GM12878 (cell line): ENCODE measurements at regions of chr1 and their contacts with region 1.

Region 1: DNA sequence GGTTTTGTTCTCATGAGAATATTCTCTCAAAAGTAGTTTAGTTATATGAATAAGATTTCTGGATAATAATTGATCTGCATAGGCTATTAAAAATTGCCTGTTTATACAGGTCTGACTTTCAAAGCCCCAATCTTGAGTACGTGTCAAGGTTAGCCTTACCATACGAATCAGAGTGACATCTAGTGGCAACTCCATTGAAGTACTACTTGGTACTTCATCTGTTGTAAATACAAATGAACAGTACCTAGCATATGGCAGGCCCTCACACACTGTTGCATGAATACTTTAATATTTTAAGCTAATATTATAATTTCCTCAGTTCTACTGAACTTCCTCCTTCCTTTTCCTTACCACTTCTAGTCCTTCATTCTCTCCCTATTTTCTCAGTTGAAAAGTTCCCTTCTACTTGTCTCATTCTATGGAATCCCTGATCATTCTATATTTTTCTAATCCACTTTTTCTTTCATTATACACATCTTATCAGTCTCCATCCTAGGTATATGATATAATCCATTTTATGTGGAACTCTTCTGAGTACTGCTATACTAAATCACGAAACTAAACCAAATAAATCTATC is 101.2 kb downstream of the AKT3 start:
- DNase-seq: peak; percentile 28
- ATAC-seq: peak; percentile 99
- H3K4me3 ChIP-seq: no peak overlapping the region
- H3K27ac ChIP-seq: no peak overlapping the region
- H3K4me1 ChIP-seq: no peaks in the 10 kb centered on the region
- H3K27me3 ChIP-seq: no peaks in the 10 kb centered on the region; a peak in 1 of 4 replicates
- CTCF ChIP-seq: peak; percentile 71 to 75 (median 73)
- EP300 ChIP-seq: no peak
- POLR2A ChIP-seq: no peak
- RAD21 ChIP-seq: peak; percentile 90

Region 2: DNA sequence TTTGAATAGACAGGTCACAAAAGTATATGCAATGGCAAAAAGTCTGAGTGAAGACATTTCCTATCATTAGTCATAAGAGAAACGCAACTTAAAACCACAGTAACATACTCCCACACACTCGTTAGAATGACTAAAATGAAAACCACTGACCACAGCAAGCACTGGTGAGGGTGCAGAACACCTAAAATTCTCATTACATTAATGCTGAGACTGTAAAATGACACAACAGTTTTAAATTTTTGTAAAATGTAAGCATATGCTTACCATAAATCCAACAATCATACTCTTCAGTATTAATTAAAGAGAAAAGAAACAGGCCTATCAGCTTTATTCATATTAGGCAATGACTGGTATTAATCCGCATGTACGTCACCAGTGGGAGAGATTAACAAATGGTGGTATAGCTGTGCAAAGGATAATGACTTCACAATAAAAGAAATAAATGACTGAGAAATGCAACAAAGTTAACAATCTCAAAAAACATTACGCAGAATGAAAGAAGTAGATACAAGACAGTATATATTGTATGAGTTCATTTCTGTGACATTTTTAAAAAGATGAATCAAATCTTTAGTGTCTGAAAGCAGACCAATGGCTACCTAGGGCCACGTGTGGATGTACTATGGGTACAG is 152.2 kb before region 1 on chr1:
- CTCF ChIA-PET with region 1: no interaction called
- POLR2A ChIA-PET with region 1: no interaction called
- RAD21 ChIA-PET with region 1: no interaction called
- SMC1A ChIA-PET with region 1: no interaction called
- in situ Hi-C with region 1: no loop called
- intact Hi-C with region 1: loop called (anchors 5 kb)
- DNase-seq: peak; percentile 76
- ATAC-seq: peak; percentile 98
- H3K4me3 ChIP-seq: no peak overlapping the region
- H3K27ac ChIP-seq: peak overlapping the region; percentile 43; the same call in 1 of the 2 replicates
- H3K4me1 ChIP-seq: peaks cover 14% of the 10 kb centered on the region; the same call in 1 of the 2 replicates
- H3K27me3 ChIP-seq: no peaks in the 10 kb centered on the region
- CTCF ChIP-seq: no peak
- EP300 ChIP-seq: peak; percentile 90 to 96
- POLR2A ChIP-seq: no peak
- RAD21 ChIP-seq: no peak

Region 3: GRCh38 chr1:243713470-243714186 is 35.2 kb before region 1 on chr1:
- CTCF ChIA-PET with region 1: interaction called, 32 read pairs
- POLR2A ChIA-PET with region 1: no interaction called
- RAD21 ChIA-PET with region 1: interaction called, 36 read pairs
- SMC1A ChIA-PET with region 1: interaction called, 30 read pairs
- in situ Hi-C with region 1: no loop called
- intact Hi-C with region 1: loop called (anchors 1 kb)
- DNase-seq: no peak
- ATAC-seq: no peak
- H3K4me3 ChIP-seq: no peak overlapping the region
- H3K27ac ChIP-seq: no peak overlapping the region
- H3K4me1 ChIP-seq: no peaks in the 10 kb centered on the region
- H3K27me3 ChIP-seq: no peaks in the 10 kb centered on the region
- CTCF ChIP-seq: no peak
- EP300 ChIP-seq: no peak
- POLR2A ChIP-seq: no peak
- RAD21 ChIP-seq: no peak

Region 4: DNA sequence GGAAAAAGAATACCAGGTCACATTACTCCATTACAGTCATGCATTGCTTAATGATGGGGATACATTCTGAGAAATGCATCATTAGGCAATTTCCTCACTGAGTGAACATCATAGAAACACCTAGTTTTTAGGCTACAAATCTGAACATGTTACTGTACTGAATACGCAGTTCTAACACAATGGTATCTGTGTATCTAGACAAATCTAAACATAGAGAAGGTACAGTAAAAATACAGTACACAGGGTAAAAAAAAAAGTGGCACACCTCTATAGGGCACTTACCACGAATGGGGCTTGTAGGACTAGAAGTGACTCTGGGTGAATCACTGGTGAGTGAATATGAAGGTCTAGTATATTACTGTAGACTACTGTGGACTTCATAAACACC is 14.5 kb before region 1 on chr1:
- CTCF ChIA-PET with region 1: interaction called, 13 read pairs
- POLR2A ChIA-PET with region 1: no interaction called
- RAD21 ChIA-PET with region 1: interaction called, 5 read pairs
- SMC1A ChIA-PET with region 1: interaction called, 17 read pairs
- in situ Hi-C with region 1: no loop called
- intact Hi-C with region 1: no loop called
- DNase-seq: no peak
- ATAC-seq: no peak
- H3K4me3 ChIP-seq: no peak overlapping the region
- H3K27ac ChIP-seq: no peak overlapping the region
- H3K4me1 ChIP-seq: peaks cover 4% of the 10 kb centered on the region; the same call in 1 of the 2 replicates
- H3K27me3 ChIP-seq: no peaks in the 10 kb centered on the region
- CTCF ChIP-seq: no peak
- EP300 ChIP-seq: no peak
- POLR2A ChIP-seq: no peak
- RAD21 ChIP-seq: no peak

Region 5: DNA sequence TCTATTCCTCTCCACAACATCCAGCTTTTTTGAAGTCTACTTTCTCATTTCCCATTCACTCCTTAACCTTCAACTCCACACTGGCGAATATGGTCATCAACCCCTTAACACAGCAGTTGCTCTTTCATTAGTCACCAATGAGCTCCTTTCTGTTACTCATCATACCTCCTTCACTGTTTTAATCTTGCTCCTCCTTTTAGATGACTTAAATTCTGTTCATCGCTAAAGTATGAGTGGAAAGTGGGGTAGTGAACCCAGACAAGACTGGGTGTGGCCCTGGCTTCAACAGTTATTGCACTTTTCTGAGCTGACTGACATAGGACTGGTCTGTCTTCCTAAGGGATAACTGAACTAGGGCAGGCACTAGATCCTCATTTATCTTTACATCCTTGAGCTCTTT is 49.9 kb after region 1 on chr1:
- CTCF ChIA-PET with region 1: no interaction called
- POLR2A ChIA-PET with region 1: no interaction called
- RAD21 ChIA-PET with region 1: no interaction called
- SMC1A ChIA-PET with region 1: no interaction called
- in situ Hi-C with region 1: no loop called
- intact Hi-C with region 1: no loop called
- DNase-seq: no peak
- ATAC-seq: no peak
- H3K4me3 ChIP-seq: no peak overlapping the region
- H3K27ac ChIP-seq: no peak overlapping the region
- H3K4me1 ChIP-seq: no peaks in the 10 kb centered on the region
- H3K27me3 ChIP-seq: no peaks in the 10 kb centered on the region
- CTCF ChIP-seq: no peak
- EP300 ChIP-seq: no peak
- POLR2A ChIP-seq: no peak
- RAD21 ChIP-seq: no peak